Dorsolateral prefrontal cortex (tissue), 120 donors: ENCODE measurements at regions of chr1 and their contacts with region 1.

Region 1: DNA sequence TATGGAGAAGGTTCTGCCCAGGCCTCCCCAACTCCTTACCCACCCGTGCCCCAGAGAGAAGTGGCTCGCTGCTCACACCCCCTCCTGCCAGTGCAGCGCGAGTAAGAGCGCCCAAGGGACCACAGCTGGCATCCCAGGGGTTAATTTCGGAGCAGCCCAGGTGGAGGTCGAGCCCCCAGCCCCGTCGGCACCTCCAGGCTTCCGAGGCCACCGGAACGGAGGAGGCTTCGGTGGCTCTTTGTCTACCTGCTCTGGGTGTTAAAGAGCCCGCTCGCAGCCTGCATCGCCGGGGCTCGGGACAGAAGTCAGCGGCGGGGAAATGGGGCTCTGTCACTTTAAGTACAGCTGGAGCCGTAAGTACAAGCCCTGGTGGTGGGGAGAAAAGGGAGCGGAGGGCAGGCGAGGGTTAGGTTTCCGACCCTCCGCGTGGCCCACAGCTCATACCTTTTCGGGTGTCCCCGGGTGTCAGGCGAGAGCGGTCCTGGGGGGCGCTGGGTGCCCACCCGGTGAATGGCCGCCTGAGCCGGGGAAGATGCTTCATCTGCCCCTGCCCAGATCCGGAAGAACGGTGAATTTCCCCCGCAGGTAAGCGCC is 89.4 kb upstream of the IPO9 start:
- DNase-seq: peak in 7 of 10 donors; percentile 69 to 80 (median 76)
- H3K4me3 ChIP-seq: peak overlapping the region; percentile 60 to 94 (median 84)
- H3K27ac ChIP-seq: peak overlapping the region; percentile 53 to 100 (median 93)
- H3K27me3 ChIP-seq: no peaks in the 10 kb centered on the region
- CTCF ChIP-seq: peak in 8 of 56 donors; percentile 10 to 24 (median 20)

Region 2: DNA sequence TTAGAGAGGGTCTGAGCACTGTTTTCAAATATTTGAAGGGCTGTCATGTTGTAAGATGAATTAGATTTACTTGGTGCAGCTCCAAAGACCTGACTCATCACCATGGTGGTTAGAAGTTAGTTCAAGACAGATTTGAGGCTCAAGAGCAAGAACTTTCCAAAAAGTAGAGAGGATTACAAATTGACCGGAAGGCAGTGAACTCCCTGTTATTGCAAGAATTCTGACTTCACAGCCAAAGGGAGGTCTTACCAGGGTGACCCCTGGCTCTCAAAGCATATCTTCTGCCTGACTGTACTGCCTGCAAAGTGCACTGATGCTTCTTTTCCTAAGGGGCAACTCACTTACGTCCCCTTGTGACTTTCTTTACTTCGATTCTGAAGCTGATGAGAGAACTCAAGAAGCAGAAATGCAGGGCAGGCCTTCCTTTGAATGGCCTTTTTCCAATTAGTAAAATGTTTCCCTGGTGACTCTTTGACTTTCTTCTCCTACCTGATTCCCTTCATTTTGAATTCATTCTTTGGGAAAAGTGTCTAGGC is 114.3 kb before region 1 on chr1:
- intact Hi-C with region 1: no loop called
- DNase-seq: no peak
- H3K4me3 ChIP-seq: no peak overlapping the region
- H3K27ac ChIP-seq: no peak overlapping the region
- H3K27me3 ChIP-seq: no peaks in the 10 kb centered on the region
- CTCF ChIP-seq: no peak

Region 3: GRCh38 chr1:201778279-201779065 is 38.9 kb after region 1 on chr1:
- intact Hi-C with region 1: loop called in 1 of 2 experiments (anchors 5 kb)
- DNase-seq: no peak
- H3K4me3 ChIP-seq: no peak overlapping the region
- H3K27ac ChIP-seq: peak overlapping the region in 52 of 59 donors; percentile 6 to 99 (median 60)
- H3K27me3 ChIP-seq: no peaks in the 10 kb centered on the region
- CTCF ChIP-seq: no peak